H1 (cell line): ENCODE measurements at regions of chr10 and their contacts with region 1.

Region 1: GRCh38 chr10:93554760-93555432 is 11.6 kb upstream of the FFAR4 start:
- DNase-seq: peak; percentile 58 to 93
- H3K4me3 ChIP-seq: no peak overlapping the region
- H3K27ac ChIP-seq: no peak overlapping the region
- H3K4me1 ChIP-seq: peaks cover 0 to 4% (median 1%) of the 10 kb centered on the region in 4 experiments; a peak in 2 of 7 replicates
- H3K27me3 ChIP-seq: no peaks in the 10 kb centered on the region
- CTCF ChIP-seq: peak; percentile 78 to 96 (median 93)
- EP300 ChIP-seq: no peak
- POLR2A ChIP-seq: no peak
- RAD21 ChIP-seq: peak; percentile 77 to 78

Region 2: GRCh38 chr10:93535293-93535692 is 19.6 kb before region 1 on chr10:
- CTCF ChIA-PET with region 1: interaction called, 55 read pairs
- POLR2A ChIA-PET with region 1: no interaction called
- DNase-seq: peak in 1 of 2 experiments; percentile 50
- H3K4me3 ChIP-seq: no peak overlapping the region
- H3K27ac ChIP-seq: no peak overlapping the region
- H3K4me1 ChIP-seq: 0 out of 7 replicates have a peak, but pooled peaks cover 0 to 3% (median 0%) of the 10 kb centered on the region in 4 experiments
- H3K27me3 ChIP-seq: no peaks in the 10 kb centered on the region
- CTCF ChIP-seq: peak; percentile 27 to 71 (median 62)
- EP300 ChIP-seq: no peak
- POLR2A ChIP-seq: no peak
- RAD21 ChIP-seq: peak; percentile 18 to 36; a peak in 3 of 4 replicates

Region 3: GRCh38 chr10:93566435-93567276 is 11.8 kb after region 1 on chr10 and contains the start of gene FFAR4:
- CTCF ChIA-PET with region 1: interaction called, 43 read pairs
- POLR2A ChIA-PET with region 1: interaction called, 3 read pairs
- DNase-seq: peak in 1 of 2 experiments; percentile 77
- H3K4me3 ChIP-seq: peak within 1 kb of the TSS; percentile 42 to 65 (median 62)
- H3K27ac ChIP-seq: no peak within 1 kb of the TSS
- H3K4me1 ChIP-seq: peaks cover 3 to 9% (median 7%) of the 10 kb centered on the region in 4 experiments
- H3K27me3 ChIP-seq: peaks cover 34 to 70% (median 61%) of the 10 kb centered on the region in 4 experiments
- CTCF ChIP-seq: no peak
- EP300 ChIP-seq: no peak
- POLR2A ChIP-seq: no peak
- RAD21 ChIP-seq: no peak
- total RNA-seq, gene FFAR4: not detected in 2 replicates

Region 4: DNA sequence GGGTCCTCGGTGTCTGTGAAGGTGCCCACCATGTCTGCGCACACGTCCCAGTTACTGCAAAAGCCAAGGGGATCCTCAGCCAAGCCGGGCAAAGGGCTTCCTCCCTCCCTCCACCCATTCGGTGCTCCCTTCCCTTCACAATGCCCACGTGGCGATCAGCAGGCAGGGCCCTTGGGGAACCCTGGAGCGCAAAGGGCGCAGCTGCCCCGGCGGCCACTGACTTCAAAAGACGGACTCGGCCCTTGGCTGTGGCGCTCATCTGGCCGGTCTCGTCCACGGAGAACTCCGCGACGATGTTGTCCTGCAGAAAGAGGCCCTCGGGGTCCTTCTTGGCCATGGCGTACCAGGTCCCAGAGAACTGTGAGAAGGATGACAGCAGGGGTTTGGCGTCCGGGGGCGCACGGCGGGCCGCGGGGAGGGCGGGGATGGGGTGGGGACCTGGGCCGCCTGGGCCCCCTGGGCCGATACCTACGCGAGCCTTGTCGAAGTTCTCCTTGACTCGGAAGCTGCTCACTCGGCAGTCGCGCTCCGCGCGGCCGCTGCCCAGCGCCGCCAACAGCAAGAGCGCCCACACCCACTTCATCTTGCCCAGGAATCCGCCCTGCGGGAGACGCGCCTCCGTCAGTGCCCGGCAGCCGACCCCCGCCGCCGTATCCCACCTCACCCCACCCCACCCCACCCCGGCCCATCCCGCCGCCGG is 45.7 kb after region 1 on chr10:
- CTCF ChIA-PET with region 1: interaction called, 11 read pairs
- POLR2A ChIA-PET with region 1: no interaction called
- DNase-seq: peak in 1 of 2 experiments; percentile 62
- H3K4me3 ChIP-seq: peak overlapping the region; percentile 26 to 60 (median 38)
- H3K27ac ChIP-seq: no peak overlapping the region
- H3K4me1 ChIP-seq: peaks cover 0 to 6% (median under 1%) of the 10 kb centered on the region in 4 experiments; a peak in 4 of 7 replicates
- H3K27me3 ChIP-seq: peaks cover 27 to 45% (median 35%) of the 10 kb centered on the region in 4 experiments
- CTCF ChIP-seq: no peak
- EP300 ChIP-seq: no peak
- POLR2A ChIP-seq: no peak
- RAD21 ChIP-seq: no peak

Region 5: GRCh38 chr10:93680412-93681047 is 125.6 kb after region 1 on chr10:
- CTCF ChIA-PET with region 1: interaction called, 37 read pairs
- POLR2A ChIA-PET with region 1: no interaction called
- DNase-seq: no peak
- H3K4me3 ChIP-seq: no peak overlapping the region
- H3K27ac ChIP-seq: no peak overlapping the region
- H3K4me1 ChIP-seq: no peaks in the 10 kb centered on the region
- H3K27me3 ChIP-seq: no peaks in the 10 kb centered on the region
- CTCF ChIP-seq: no peak; a peak in 1 of 4 replicates
- EP300 ChIP-seq: no peak
- POLR2A ChIP-seq: no peak
- RAD21 ChIP-seq: peak; percentile 58 to 66